ENCODE measurements at regions of chr19 and their contacts with region 1.

Region 1: GRCh38 chr19:41883821-41884733 is 1.1 kb downstream of the ARHGEF1 start:
- DNase-seq: peak; percentile 68 to 94 (median 87)
- ATAC-seq: peak; percentile 37
- H3K4me3 ChIP-seq: peak overlapping the region; percentile 94
- H3K4me3 Mint-ChIP-seq: peak overlapping the region; percentile 90
- H3K27ac ChIP-seq: peak overlapping the region; percentile 69 to 96
- H3K27ac Mint-ChIP-seq: peak overlapping the region; percentile 98
- H3K4me1 ChIP-seq: peaks cover 85% of the 10 kb centered on the region
- H3K4me1 Mint-ChIP-seq: peaks cover 78% of the 10 kb centered on the region
- H3K27me3 ChIP-seq: no peaks in the 10 kb centered on the region
- H3K27me3 Mint-ChIP-seq: no peaks in the 10 kb centered on the region
- CTCF ChIP-seq: no peak

Region 2: DNA sequence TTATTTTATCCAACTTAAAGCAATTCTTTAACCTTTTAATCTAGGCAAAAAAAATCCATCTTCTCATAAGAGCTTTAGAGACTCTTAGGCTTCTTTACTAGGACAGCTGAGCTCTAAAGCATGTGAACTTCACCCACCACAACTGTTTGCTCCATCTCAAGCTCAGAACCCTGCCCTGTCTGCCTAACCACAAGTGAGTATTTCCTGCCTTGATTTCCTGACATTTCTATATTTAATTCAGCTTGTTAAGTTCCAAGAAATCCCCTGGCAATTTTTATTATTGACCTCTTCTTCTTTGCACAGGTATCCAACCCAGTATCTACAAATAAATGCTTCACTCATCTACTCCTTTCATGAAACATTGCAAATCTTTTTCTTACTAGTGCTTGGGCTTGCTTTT is 329.2 kb before region 1 on chr19:
- CTCF ChIA-PET with region 1: no interaction called
- POLR2A ChIA-PET with region 1: no interaction called
- intact Hi-C with region 1: loop called in 1 of 2 experiments (anchors 10 kb)
- DNase-seq: peak in 6 of 14 experiments; percentile 32 to 84 (median 70)
- ATAC-seq: peak; percentile 72
- H3K4me3 ChIP-seq: peak overlapping the region; percentile 74
- H3K4me3 Mint-ChIP-seq: peak overlapping the region; percentile 97
- H3K27ac ChIP-seq: peak overlapping the region; percentile 42 to 63
- H3K27ac Mint-ChIP-seq: peak overlapping the region; percentile 82
- H3K4me1 ChIP-seq: peaks cover 37% of the 10 kb centered on the region
- H3K4me1 Mint-ChIP-seq: peaks cover 75% of the 10 kb centered on the region
- H3K27me3 ChIP-seq: no peaks in the 10 kb centered on the region
- H3K27me3 Mint-ChIP-seq: no peaks in the 10 kb centered on the region
- CTCF ChIP-seq: no peak

Region 3: GRCh38 chr19:41904118-41904870 is 20.2 kb after region 1 on chr19:
- CTCF ChIA-PET with region 1: no interaction called
- POLR2A ChIA-PET with region 1: interaction called, 92 read pairs
- intact Hi-C with region 1: no loop called
- DNase-seq: no peak
- ATAC-seq: no peak
- H3K4me3 ChIP-seq: no peak overlapping the region
- H3K4me3 Mint-ChIP-seq: no peak overlapping the region
- H3K27ac ChIP-seq: no peak overlapping the region
- H3K27ac Mint-ChIP-seq: no peak overlapping the region
- H3K4me1 ChIP-seq: peaks cover 48% of the 10 kb centered on the region
- H3K4me1 Mint-ChIP-seq: peaks cover 52% of the 10 kb centered on the region
- H3K27me3 ChIP-seq: no peaks in the 10 kb centered on the region
- H3K27me3 Mint-ChIP-seq: no peaks in the 10 kb centered on the region
- CTCF ChIP-seq: no peak

Region 4: GRCh38 chr19:41920882-41921576 is 37.0 kb after region 1 on chr19:
- CTCF ChIA-PET with region 1: no interaction called
- POLR2A ChIA-PET with region 1: interaction called, 13 read pairs
- intact Hi-C with region 1: loop called in 1 of 2 experiments (anchors 5 kb)
- DNase-seq: no peak
- ATAC-seq: peak; percentile 33
- H3K4me3 ChIP-seq: no peak overlapping the region
- H3K4me3 Mint-ChIP-seq: peak overlapping the region; percentile 21
- H3K27ac ChIP-seq: no peak overlapping the region
- H3K27ac Mint-ChIP-seq: no peak overlapping the region
- H3K4me1 ChIP-seq: peaks cover 26% of the 10 kb centered on the region
- H3K4me1 Mint-ChIP-seq: peaks cover 12% of the 10 kb centered on the region
- H3K27me3 ChIP-seq: peaks cover 17 to 21% of the 10 kb centered on the region in 2 experiments
- H3K27me3 Mint-ChIP-seq: peaks cover 10% of the 10 kb centered on the region
- CTCF ChIP-seq: no peak

Region 5: GRCh38 chr19:41934849-41935374 is 50.8 kb after region 1 on chr19:
- CTCF ChIA-PET with region 1: no interaction called
- POLR2A ChIA-PET with region 1: interaction called, 62 read pairs
- intact Hi-C with region 1: loop called in 1 of 2 experiments (anchors 2 kb)
- DNase-seq: peak; percentile 65 to 88 (median 74)
- ATAC-seq: peak; percentile 63
- H3K4me3 ChIP-seq: no peak overlapping the region
- H3K4me3 Mint-ChIP-seq: peak overlapping the region; percentile 40
- H3K27ac ChIP-seq: no peak overlapping the region
- H3K27ac Mint-ChIP-seq: peak overlapping the region; percentile 73
- H3K4me1 ChIP-seq: peaks cover 49% of the 10 kb centered on the region
- H3K4me1 Mint-ChIP-seq: peaks cover 56% of the 10 kb centered on the region
- H3K27me3 ChIP-seq: no peaks in the 10 kb centered on the region
- H3K27me3 Mint-ChIP-seq: no peaks in the 10 kb centered on the region
- CTCF ChIP-seq: peak; percentile 96

Region 6: GRCh38 chr19:41951686-41952172 is 67.7 kb after region 1 on chr19:
- CTCF ChIA-PET with region 1: interaction called, 13 read pairs
- POLR2A ChIA-PET with region 1: interaction called, 34 read pairs
- intact Hi-C with region 1: loop called (anchors 1 to 5 kb)
- DNase-seq: peak; percentile 76 to 95 (median 88)
- ATAC-seq: peak; percentile 95
- H3K4me3 ChIP-seq: no peak overlapping the region
- H3K4me3 Mint-ChIP-seq: peak overlapping the region; percentile 61
- H3K27ac ChIP-seq: no peak overlapping the region
- H3K27ac Mint-ChIP-seq: peak overlapping the region; percentile 48
- H3K4me1 ChIP-seq: peaks cover 15% of the 10 kb centered on the region
- H3K4me1 Mint-ChIP-seq: peaks cover 20% of the 10 kb centered on the region
- H3K27me3 ChIP-seq: no peaks in the 10 kb centered on the region
- H3K27me3 Mint-ChIP-seq: no peaks in the 10 kb centered on the region
- CTCF ChIP-seq: peak; percentile 99

Measured in CD4-positive, alpha-beta T cell (primary cell).